ENCODE measurements at regions of chr13 and their contacts with region 1.

Region 1: DNA sequence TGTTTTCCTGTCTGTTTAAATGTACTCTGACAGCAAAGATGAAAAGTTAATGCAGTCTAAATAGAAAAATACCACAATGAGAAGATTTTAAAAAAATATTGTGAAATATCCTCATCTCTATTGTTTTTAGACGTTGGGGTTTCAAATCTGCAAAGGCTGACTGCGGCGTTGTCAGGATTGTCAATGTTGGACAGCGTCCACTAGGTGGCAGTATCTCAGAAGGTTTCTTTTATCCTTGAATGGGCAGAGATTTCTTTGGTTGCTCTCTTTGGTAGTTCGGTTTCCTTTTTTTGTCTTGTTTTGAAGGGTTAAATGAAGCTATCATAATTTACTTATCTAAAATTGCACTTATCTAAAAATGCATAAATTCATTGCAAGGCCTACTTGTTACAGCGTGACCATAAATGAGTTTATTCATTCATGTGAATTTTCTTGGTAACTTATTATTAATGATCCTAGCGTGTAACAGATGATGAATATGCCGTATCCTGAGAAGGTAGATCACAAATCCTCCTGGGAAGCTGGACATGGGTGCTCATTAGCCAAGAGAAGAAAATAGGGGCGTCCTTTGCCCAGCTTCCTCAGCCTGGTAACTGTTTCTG is 21.1 kb downstream of the TNFSF11 start:
- DNase-seq: peak; percentile 12
- H3K4me3 Mint-ChIP-seq: no peak overlapping the region
- H3K27ac Mint-ChIP-seq: no peak overlapping the region
- H3K4me1 Mint-ChIP-seq: peaks cover 2% of the 10 kb centered on the region
- H3K27me3 Mint-ChIP-seq: peaks cover 10% of the 10 kb centered on the region

Region 2: DNA sequence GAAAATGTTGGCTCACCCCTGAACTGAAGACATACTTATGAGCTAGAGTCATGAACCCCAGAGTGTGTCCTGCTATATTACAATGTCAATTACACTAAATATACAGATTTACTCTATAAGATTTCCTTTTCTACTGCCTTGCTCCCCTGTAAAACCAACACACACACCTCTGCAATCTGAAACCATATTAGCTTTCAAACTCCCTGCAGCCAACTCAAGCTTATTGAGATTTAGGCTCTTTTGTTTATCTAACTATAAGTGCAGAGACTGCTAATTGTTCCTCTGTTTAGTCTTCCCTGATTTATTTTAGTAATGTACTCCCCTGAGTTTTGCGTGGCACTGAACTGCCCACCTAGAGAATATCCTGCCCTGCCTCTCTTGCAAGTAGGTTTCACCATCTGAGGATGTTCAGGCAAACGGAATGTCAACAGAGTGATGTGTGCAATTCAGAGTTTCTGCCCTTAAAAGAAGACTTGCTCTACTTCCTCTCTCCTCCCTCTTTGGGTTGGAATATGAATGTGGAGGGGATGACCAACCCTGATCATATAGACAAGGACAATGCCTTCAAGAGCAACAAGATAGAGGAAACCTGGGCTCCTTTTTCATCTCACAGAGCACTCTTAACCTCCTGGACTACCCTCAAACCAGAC is 208.6 kb after region 1 on chr13:
- intact Hi-C with region 1: loop called (anchors 10 kb)
- DNase-seq: no peak
- H3K4me3 Mint-ChIP-seq: no peak overlapping the region
- H3K27ac Mint-ChIP-seq: no peak overlapping the region
- H3K4me1 Mint-ChIP-seq: no peaks in the 10 kb centered on the region
- H3K27me3 Mint-ChIP-seq: peaks cover 7% of the 10 kb centered on the region

Region 3: GRCh38 chr13:42865768-42866102 is 270.7 kb after region 1 on chr13:
- intact Hi-C with region 1: no loop called
- DNase-seq: no peak
- H3K4me3 Mint-ChIP-seq: no peak overlapping the region
- H3K27ac Mint-ChIP-seq: no peak overlapping the region
- H3K4me1 Mint-ChIP-seq: no peaks in the 10 kb centered on the region
- H3K27me3 Mint-ChIP-seq: peaks cover 3% of the 10 kb centered on the region

Region 4: GRCh38 chr13:43804461-43805070 is 1209.5 kb after region 1 on chr13:
- intact Hi-C with region 1: loop called (anchors 2 kb)
- DNase-seq: no peak
- H3K4me3 Mint-ChIP-seq: no peak overlapping the region
- H3K27ac Mint-ChIP-seq: no peak overlapping the region
- H3K4me1 Mint-ChIP-seq: peaks cover 4% of the 10 kb centered on the region
- H3K27me3 Mint-ChIP-seq: peaks cover 3% of the 10 kb centered on the region

Region 5: DNA sequence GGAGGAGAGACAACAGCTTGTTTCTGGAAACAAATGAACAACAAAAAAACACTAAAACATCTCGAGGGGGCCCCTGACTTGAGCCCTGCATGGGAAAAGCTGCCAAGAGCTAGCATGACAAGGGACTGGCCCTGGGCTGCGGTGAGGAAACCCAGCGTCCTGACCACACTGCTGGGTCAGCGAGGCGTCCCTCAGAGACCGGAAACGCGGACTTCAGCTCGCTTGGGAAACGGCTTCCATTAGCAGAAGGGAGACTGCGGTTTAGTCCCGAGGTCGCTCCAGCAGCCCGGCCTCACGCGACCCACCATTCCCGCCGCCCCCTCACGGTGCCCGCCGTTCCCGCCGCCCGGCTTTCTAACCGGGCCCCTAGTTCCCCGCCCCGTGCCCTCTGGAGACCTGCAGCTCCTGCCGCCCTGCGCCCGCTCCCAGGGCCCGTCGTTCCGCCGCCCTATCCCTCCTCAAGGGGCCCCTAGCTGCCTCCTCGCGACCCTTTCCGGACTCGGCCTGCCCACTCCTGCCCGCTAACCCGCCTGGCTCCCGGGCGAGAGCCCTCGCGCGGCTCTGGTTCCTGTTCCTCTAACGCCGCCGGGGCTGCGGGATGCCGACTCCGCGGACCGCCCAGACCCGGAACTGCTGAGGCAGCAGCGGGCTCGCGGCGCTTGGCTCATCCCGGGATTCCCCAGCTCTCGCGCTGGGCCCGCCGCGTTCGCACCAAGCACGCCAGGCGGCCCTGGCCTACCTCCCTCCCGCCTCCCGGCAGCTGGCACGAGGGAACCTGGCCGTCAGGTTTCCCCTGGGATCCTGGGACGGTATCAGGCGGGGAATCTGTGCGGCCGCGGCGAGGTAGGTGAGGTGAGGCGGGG is 1284.1 kb after region 1 on chr13 and contains the start of gene CCDC122:
- intact Hi-C with region 1: loop called (anchors 2 kb)
- DNase-seq: peak; percentile 75
- H3K4me3 Mint-ChIP-seq: peak within 1 kb of the TSS; percentile 84
- H3K27ac Mint-ChIP-seq: peak within 1 kb of the TSS; percentile 81
- H3K4me1 Mint-ChIP-seq: peaks cover 28% of the 10 kb centered on the region
- H3K27me3 Mint-ChIP-seq: peaks cover 15% of the 10 kb centered on the region
- total RNA-seq, gene CCDC122: 0.86 and 1.5 TPM in 2 replicates